Esophagus squamous epithelium (tissue), 5 donors: ENCODE measurements at regions of chr1 and their contacts with region 1.

Region 1: GRCh38 chr1:176559878-176560277 is 96.9 kb downstream of the PAPPA2 start:
- DNase-seq: no peak
- H3K4me3 ChIP-seq: no peak overlapping the region
- H3K27ac ChIP-seq: no peak overlapping the region
- H3K4me1 ChIP-seq: no peaks in the 10 kb centered on the region
- H3K27me3 ChIP-seq: peaks cover 0 to 14% (median 0%) of the 10 kb centered on the region in 4 donors
- CTCF ChIP-seq: peak; percentile 33 to 66 (median 55)
- POLR2A ChIP-seq: no peak

Region 2: GRCh38 chr1:176701151-176701866 is 141.4 kb after region 1 on chr1:
- intact Hi-C with region 1: loop called (anchors 10 kb)
- DNase-seq: no peak
- H3K4me3 ChIP-seq: no peak overlapping the region
- H3K27ac ChIP-seq: no peak overlapping the region
- H3K4me1 ChIP-seq: no peaks in the 10 kb centered on the region
- H3K27me3 ChIP-seq: no peaks in the 10 kb centered on the region
- CTCF ChIP-seq: no peak
- POLR2A ChIP-seq: no peak

Region 3: DNA sequence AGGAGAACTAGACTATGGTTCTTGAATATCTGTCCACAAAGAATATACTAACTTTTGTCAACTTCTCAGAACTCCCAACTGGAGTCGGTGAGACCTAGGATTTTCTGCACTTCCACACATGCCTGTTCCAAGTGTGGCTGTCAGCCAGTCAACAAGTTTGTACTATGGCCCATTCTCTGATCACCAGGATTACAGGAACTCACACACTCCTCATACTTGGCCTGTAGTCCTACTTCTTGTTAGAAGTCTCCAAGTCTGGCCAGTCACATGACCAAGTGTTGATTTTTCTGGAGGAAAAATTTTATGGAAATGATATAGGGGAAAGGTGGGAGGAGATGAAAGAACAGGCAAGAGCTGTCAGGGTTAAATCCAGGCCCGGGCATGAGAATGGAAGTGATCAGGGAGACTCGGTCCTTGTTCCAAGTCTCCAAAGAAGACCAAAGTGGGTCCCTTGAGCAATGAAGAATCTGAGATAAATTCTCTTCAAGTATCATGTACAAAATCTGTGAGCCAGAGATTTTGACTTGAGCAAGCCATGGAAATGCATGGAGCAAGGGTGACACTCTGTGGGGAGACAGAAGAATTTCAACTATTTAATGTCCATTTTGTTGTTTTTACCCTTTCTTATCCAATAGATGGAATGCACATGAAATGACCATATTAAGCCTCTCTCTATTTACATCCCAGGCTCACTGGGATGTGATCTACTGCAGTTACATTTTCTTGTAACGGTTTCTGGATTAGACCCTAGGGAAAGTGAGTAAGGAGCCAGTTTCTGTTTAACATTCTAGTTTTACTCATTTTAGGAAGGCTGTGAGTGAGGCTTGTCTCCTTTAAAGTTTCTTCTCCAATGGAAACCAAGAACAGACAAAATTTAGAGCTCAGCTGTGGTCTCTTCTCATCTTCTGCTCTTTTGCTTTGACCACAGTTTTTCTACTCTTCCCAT is 283.7 kb after region 1 on chr1:
- intact Hi-C with region 1: loop called (anchors 10 kb)
- DNase-seq: no peak
- H3K4me3 ChIP-seq: no peak overlapping the region
- H3K27ac ChIP-seq: no peak overlapping the region
- H3K4me1 ChIP-seq: no peaks in the 10 kb centered on the region
- H3K27me3 ChIP-seq: no peaks in the 10 kb centered on the region
- CTCF ChIP-seq: peak in 4 of 6 experiments; percentile 26 to 41 (median 31)
- POLR2A ChIP-seq: no peak

Region 4: DNA sequence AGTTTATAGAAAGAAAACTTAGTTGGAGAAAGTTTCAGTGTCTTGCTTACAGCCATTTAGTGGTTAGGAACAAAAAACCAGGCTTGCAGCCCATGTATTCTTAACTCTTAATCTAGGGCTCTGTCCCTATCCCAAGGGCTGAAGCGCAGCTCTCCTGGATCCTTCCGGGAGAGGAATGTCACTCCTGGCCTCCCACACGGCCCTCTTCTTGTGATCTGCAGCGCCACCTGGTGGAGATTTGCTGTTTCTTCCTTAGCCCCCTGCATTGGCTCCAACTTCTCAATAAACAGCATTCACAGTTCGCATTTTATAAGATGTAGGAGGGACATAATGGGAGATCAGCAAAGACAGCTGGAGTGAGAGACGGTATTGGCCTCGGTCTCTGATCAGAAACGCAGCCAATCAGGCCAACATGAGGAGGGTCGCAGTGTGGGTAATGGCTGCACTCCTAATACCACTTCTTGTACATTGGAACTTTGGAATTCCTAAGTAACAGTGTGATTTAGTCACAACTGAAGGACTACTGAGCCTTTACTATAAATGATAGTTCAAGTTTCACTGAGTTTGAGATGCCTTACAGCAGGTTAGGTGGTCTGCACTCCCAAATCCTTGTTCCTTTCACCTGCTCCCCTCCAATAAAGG is 321.2 kb after region 1 on chr1:
- intact Hi-C with region 1: loop called (anchors 5 kb)
- DNase-seq: no peak
- H3K4me3 ChIP-seq: no peak overlapping the region
- H3K27ac ChIP-seq: no peak overlapping the region
- H3K4me1 ChIP-seq: no peaks in the 10 kb centered on the region
- H3K27me3 ChIP-seq: no peaks in the 10 kb centered on the region
- CTCF ChIP-seq: peak; percentile 46 to 73 (median 66)
- POLR2A ChIP-seq: no peak